Brain microvascular endothelial cell (primary cell): ENCODE measurements at regions of chr9 and their contacts with region 1.

Region 1: DNA sequence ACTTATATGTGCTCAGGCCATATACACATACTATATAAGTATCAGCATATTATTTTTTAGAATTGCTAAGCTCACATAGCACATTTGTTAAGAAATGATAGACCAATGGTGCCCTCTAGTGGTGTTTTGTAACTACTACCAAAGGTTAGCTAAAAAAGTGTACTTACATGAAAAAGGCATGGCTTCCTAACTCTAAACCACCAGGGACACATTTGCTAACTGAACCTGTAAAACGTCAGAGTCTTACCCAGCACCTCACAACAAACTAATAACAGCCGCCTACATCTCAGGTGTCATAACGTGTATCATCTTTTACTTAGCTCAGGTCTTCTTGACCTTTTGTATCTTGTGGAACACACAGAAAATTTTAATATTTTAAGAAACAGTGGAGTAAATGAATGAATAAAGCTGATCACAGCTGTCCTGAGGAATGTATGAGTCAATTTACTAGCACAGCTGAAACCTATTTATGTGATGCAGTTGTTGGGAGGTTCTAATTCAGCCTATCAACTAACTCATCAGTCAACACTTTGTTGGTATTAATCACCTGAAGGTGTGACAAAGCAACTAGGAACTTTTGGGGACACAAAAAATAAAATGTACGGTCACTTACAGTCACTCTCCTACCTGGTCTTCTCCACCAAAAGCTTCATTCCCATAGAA is 72.9 kb downstream of the BAAT start:
- DNase-seq: peak; percentile 60
- H3K4me3 ChIP-seq: no peak overlapping the region
- H3K27ac ChIP-seq: no peak overlapping the region
- H3K27me3 ChIP-seq: no peaks in the 10 kb centered on the region
- CTCF ChIP-seq: peak; percentile 46

Region 2: GRCh38 chr9:100601216-100601615 is 710.7 kb before region 1 on chr9:
- in situ Hi-C with region 1: loop called (anchors 25 kb)
- DNase-seq: peak; percentile 44
- H3K4me3 ChIP-seq: no peak overlapping the region
- H3K27ac ChIP-seq: no peak overlapping the region
- H3K27me3 ChIP-seq: no peaks in the 10 kb centered on the region
- CTCF ChIP-seq: peak; percentile 90